Ascending aorta (tissue), 2 donors: ENCODE measurements at regions of chr5 and their contacts with region 1.

Region 1: GRCh38 chr5:138178516-138179276 is at the starts of genes BRD8 and KIF20A:
- DNase-seq: peak; percentile 89 to 98
- H3K4me3 ChIP-seq: peak within 1 kb of the TSS; percentile 82 to 94
- H3K27ac ChIP-seq: peak within 1 kb of the TSS; percentile 75 to 79
- H3K4me1 ChIP-seq: peaks cover 0 to 9% of the 10 kb centered on the region in 2 donors
- H3K27me3 ChIP-seq: no peaks in the 10 kb centered on the region
- CTCF ChIP-seq: no peak
- total RNA-seq, gene BRD8: 18.8 TPM
- total RNA-seq, gene KIF20A: not detected

Region 2: GRCh38 chr5:136182618-136183017 is 1996.1 kb before region 1 on chr5:
- intact Hi-C with region 1: no loop called
- DNase-seq: no peak
- H3K4me3 ChIP-seq: no peak overlapping the region
- H3K27ac ChIP-seq: no peak overlapping the region
- H3K4me1 ChIP-seq: no peaks in the 10 kb centered on the region
- H3K27me3 ChIP-seq: no peaks in the 10 kb centered on the region
- CTCF ChIP-seq: no peak

Region 3: GRCh38 chr5:138331449-138332368 is 153.0 kb after region 1 on chr5 and contains the start of gene CDC25C:
- intact Hi-C with region 1: loop called (anchors 5 kb)
- DNase-seq: peak; percentile 98 to 99
- H3K4me3 ChIP-seq: peak within 1 kb of the TSS; percentile 47 to 65
- H3K27ac ChIP-seq: no peak within 1 kb of the TSS
- H3K4me1 ChIP-seq: peaks cover 0 to 3% of the 10 kb centered on the region in 2 donors
- H3K27me3 ChIP-seq: no peaks in the 10 kb centered on the region
- CTCF ChIP-seq: no peak
- total RNA-seq, gene CDC25C: not detected